ENCODE measurements at regions of chr6 and their contacts with region 1.

Region 1: DNA sequence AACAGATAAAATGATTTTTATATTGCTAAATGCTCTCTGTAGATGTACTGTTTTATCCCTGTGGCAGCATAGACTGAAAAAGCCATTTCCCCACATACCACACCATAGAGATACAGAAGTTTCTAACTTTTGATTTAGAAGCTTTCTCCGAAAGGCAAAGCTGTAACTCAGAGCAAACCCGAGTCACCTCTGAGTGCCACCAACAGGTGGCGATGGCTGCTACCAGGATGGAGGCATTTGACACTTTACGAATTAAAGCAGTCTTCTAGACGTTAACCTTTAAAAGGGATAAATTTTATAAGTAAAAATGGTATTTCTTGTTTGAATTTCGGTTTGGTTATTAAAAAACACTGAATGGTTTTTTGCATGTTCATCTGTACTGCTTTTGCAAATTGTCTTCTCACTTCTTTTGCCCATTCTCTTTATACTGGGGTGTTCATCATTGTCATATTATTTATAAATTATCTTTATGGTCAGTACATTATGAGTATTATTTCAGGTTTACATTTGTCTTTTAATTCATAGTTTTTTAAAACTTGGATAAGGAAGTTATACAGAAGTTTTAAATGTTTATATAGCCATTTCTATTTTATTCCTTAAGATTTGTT is 201.0 kb upstream of the CEP162 start:
- DNase-seq: peak; percentile 86

Region 2: DNA sequence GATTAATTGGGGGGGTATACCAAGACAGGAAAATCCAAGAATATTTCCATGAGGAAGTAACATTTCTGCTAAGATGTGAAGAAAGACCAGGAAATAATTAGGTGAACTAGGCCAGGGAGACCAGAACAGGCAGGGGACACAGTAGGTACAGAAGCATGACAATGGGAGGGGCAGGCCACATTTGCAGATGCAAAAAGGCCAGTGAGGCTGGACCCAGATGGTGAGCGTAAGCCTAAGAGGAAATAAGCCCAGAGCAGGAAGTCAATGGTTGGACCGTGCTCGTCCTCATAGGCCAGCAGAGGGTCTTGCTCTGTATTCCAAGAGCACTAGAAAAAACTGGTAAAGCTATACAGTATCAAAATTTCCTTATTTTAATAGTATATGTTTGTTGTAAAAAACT is 210.3 kb before region 1 on chr6:
- intact Hi-C with region 1: no loop called
- DNase-seq: no peak

Region 3: GRCh38 chr6:84466511-84466910 is 38.1 kb after region 1 on chr6:
- intact Hi-C with region 1: no loop called
- DNase-seq: no peak

Region 4: GRCh38 chr6:84508981-84509380 is 80.6 kb after region 1 on chr6:
- intact Hi-C with region 1: no loop called
- DNase-seq: no peak

Region 5: DNA sequence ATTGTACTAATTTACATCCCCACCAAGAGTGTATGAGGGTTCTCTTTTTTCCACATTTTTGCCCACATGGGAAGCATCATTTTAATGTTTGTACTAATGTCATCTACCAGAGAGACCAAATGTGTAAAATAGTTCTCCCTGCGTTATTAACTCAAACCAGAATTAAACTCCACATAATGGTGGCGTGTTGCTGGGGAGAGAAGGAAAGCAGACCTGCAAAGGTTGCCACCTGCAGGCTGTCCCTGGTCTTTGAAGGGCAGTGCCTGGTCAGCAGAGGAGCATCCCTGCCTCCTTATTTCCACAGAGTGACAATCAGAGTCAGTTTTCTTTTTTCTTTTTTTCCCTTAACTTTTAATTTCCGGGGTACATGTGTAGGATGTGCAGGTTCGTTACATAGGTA is 121.5 kb after region 1 on chr6:
- intact Hi-C with region 1: loop called in 1 of 2 experiments (anchors 10 kb)
- DNase-seq: no peak

Region 6: DNA sequence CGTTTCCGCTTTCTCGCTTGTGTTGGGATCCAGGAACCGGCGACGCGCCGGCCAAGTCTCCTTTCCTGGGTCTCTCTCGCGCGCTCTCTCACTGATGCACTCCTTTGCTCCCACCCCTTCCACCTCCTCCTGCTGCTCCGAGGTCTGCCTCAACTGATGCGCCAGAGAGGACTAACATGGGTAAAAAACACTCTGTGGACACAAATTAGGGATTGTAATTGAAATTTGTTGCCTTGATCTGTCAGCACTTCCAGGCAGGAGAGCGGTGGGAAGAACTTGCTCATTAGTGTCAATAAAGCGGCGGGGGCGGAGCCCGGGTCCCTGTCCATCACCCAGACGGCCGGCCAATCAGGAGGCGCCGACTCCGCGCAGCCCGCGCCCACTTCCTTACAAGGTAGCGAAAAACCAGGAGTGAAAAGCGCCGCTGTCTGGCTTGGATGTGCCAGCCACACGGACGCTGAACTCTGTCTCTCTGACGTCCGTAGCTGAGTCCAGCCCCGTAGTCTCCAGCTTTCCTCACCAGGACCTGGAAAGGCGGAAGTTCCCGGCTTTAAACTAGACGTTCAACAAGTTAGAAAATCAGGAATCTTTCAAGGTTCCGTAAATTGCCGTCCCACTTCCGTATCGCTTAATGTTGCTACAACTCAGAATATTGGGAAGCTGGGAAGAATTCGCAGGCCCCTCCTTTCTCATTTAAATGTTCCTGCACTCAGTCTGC is 336.1 kb after region 1 on chr6 and contains the start of gene TBX18:
- intact Hi-C with region 1: loop called in 1 of 2 experiments (anchors 10 kb)
- DNase-seq: peak; percentile 98
- total RNA-seq, gene TBX18: 42.3 to 45.5 TPM

Region 7: DNA sequence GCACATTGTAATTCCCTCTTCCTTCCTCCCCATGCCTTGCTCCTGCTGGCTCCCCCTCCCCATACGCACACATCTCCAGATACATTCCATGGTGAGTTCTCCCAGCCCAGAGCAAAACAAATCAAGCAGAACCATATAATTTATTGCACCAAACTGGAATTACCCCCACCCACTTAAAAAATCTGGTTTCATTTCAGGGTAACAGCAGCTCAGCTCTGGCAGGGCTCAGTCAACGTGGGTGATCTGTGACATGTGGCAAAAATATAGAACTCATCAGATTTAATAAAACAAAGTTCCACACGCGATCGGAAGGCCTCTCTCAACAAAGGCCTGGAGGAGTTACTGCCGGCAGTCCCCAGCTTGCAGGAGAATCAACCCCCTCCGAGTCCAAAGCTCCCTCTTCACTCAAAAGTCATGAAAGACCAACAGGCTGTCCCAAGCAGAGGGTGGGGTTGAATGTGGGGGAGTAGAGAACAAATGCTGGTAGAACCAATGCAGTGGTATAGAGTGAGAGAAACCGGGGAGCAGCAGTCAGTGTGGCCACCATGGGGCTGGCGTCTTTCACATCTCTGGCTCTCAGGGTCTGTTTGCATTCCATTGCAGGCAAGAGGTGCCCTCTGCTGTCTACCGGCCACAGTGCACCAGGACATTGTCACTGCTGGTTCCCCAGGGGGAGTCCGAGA is 698.2 kb after region 1 on chr6:
- intact Hi-C with region 1: loop called in 1 of 2 experiments (anchors 5 kb)
- DNase-seq: peak; percentile 80

Measured in posterior vena cava (tissue), 2 donors.